Heart right ventricle (tissue), 16 donors: ENCODE measurements at regions of chr21 and their contacts with region 1.

Region 1: DNA sequence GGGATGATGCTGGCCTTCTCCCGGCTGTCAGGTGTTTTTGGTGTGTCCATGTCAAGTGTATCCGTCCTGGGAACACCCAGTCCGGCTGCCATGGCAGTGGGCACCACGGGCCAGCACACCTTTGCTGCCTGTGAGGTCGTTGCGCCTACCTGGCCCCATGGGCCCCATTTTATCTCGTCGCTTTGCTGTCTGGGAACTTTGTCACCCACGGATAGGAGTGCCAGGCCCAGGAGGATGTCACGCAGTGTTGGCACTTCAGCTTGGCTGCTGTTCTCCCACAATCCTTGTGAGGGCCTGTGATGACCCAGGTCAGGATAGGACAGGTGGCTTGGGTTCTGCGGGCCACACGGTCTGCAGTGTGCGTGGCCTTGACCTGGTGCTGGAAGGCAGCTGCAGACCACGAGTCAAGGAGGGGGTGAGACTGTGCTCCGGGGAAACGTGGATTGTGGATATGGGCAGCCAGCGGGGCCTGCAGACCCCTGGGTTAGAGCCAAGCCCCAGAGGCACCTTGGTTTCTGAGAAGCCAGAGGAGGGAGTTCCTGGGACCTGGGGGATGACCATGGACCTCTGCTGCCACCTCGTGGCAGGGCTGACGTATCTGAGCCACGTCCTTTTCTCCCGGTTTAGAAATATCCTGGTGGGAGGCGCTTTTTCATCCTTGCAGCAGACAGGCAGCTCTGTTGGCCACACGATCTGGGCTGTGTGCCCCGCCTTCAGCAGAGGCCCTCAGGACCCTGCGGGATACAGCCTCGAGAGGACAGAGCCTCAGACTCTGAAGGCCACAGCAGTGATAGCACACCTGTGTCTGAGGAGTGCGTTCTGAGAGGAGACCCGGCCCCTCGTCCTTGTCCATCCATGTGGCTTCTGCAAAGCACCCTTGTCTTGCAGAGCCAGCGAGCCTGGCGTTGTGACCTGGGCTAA is 161.1 kb upstream of the COL6A1 start:
- DNase-seq: peak; percentile 64 to 82
- ATAC-seq: peak; percentile 83 to 90 (median 87)
- H3K4me3 ChIP-seq: no peak overlapping the region
- H3K27ac ChIP-seq: no peak overlapping the region
- H3K4me1 ChIP-seq: peaks cover 0 to 19% (median 0%) of the 10 kb centered on the region in 9 donors
- H3K27me3 ChIP-seq: peaks cover 0 to 26% (median 0%) of the 10 kb centered on the region in 7 donors
- CTCF ChIP-seq: peak; percentile 63 to 90 (median 81)

Region 2: DNA sequence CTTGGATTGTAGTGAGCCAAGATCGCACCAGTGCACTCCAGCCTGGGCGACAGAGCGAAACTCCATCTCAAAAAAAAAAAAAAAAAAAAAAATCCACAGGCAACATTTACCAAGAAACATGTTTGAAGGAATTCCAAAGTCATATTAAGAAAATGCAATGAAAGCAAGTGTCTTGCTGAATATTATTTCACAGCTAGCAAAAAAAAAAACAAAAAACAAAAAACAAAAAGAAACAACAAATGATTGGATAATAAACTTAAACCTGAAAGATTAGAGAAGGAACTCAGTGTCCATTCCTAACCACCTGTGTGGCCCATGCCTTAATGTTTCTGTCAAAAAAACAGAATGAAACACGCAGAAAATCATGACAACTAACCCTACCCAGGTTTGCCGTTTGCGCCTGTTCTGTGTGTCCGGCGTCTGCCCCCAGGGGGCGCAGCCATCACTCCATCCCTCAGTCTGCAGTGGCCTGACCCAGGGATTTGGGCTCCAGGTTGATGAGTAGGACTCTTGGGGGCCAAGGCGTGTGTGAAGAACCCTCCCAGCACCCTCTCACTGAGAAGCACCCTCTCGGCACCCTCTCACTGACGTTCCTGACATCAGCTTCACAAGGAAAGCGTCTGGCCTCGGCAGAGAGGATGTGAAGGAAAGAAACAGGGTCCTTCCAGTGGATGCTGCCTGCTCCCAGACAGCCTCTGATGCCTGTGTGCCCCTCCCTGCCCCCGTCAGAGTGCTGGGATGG is 927.7 kb before region 1 on chr21:
- intact Hi-C with region 1: loop called in 1 of 10 experiments (anchors 5 kb)
- DNase-seq: peak; percentile 62 to 74
- ATAC-seq: peak; percentile 39 to 78 (median 68)
- H3K4me3 ChIP-seq: no peak overlapping the region
- H3K27ac ChIP-seq: peak overlapping the region in 1 of 10 donors; percentile 34
- H3K4me1 ChIP-seq: peaks cover 0 to 10% (median 0%) of the 10 kb centered on the region in 9 donors
- H3K27me3 ChIP-seq: peaks cover 0 to 12% (median 3%) of the 10 kb centered on the region in 7 donors
- CTCF ChIP-seq: peak; percentile 66 to 90 (median 84)

Region 3: DNA sequence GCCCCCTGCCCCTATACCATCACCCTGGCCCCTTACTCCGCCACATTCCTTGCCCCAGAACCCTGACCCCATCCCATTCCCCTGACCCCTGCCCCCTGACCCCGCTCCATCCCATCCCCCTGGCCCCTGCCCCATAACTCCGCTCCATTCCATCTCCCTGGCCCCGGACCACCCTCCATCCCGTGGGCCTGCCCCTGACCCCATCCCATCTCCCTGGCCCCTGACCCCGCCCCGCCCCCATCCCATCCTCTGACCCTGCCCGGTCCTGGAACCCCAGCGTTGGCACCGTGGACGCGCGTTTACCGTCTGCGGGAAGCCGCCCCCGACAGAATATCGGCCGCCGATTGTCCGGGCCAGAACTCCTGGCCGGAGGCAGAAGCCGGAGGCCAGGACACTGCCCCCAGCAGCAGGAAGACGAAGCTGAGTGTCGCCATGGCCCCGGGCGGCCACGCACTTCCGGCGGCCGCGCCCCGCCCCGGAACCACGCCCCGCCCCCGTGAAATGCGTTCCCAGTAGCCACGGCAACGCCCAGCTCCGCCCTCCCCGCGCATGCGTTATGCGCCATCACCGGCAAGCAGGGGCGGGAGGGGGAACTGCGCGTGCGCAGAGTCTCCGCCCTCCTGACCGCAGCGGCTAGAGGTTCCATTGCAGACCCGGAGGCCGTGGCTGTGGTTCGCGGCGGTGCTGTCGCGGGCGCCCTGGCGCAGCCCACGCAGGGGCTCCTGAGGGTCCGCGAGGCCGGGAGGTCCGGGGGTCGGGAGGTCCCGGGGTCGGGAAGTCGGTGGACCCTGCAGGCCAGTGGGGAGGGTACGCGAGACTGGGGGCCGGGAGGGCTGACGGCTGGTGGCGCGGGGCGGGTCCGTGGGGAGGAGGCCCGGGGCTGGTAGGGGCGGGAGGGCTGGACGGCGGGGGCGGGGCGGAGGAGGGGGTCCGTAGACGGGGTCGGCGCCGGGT is 532.7 kb before region 1 on chr21 and contains the start of gene POFUT2:
- intact Hi-C with region 1: loop called in 1 of 10 experiments (anchors 5 kb)
- DNase-seq: peak; percentile 97 to 99
- ATAC-seq: peak; percentile 89 to 93 (median 92)
- H3K4me3 ChIP-seq: peak within 1 kb of the TSS; percentile 41 to 77 (median 68)
- H3K27ac ChIP-seq: peak within 1 kb of the TSS in 9 of 10 donors; percentile 35 to 90 (median 81)
- H3K4me1 ChIP-seq: peaks cover 16 to 40% (median 28%) of the 10 kb centered on the region in 9 donors
- H3K27me3 ChIP-seq: no peaks in the 10 kb centered on the region
- CTCF ChIP-seq: peak in 1 of 9 donors; percentile 3
- total RNA-seq, gene POFUT2: 12.7 to 20.4 (median 16.3) TPM

Region 4: DNA sequence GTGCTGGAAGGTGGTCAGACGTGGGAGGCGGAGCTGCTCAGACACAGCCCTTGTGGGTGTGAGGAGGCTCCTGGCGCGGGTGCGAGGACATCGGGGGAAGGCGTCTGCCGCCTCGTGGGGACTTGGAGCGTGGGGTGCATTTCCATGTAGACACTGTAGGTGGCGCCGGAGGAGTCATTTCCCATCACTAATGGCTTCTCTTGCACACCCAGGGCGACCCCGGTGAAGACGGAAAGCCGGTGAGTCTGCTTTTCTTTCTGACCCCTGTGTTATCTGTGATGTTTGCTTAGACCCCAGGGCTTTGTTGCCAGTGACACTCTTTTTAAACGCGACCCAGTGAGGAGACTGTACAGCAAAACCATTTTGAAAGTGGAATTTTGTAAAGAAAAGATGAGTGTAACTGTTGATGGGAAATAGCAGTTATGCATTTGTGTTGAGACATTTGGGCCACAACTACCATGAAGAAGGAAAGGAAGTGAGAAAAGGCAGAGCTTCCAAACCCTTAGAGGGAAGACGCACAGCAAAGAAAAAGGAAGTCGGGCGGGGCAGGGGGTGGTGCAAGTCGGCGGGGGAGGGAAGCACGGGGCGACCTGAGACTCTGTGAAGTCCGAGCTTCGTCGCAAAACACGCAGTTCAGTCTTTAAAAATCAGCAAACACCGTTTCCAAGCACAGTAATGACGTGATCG is 342.2 kb before region 1 on chr21:
- intact Hi-C with region 1: loop called in 1 of 10 experiments (anchors 1 kb)
- DNase-seq: peak; percentile 70 to 73
- ATAC-seq: peak in 7 of 8 donors; percentile 49 to 76 (median 56)
- H3K4me3 ChIP-seq: peak overlapping the region in 5 of 10 donors; percentile 9 to 35 (median 31)
- H3K27ac ChIP-seq: peak overlapping the region in 8 of 10 donors; percentile 6 to 91 (median 44)
- H3K4me1 ChIP-seq: peaks cover 6 to 34% (median 13%) of the 10 kb centered on the region in 9 donors
- H3K27me3 ChIP-seq: no peaks in the 10 kb centered on the region
- CTCF ChIP-seq: peak; percentile 66 to 87 (median 82)

Region 5: DNA sequence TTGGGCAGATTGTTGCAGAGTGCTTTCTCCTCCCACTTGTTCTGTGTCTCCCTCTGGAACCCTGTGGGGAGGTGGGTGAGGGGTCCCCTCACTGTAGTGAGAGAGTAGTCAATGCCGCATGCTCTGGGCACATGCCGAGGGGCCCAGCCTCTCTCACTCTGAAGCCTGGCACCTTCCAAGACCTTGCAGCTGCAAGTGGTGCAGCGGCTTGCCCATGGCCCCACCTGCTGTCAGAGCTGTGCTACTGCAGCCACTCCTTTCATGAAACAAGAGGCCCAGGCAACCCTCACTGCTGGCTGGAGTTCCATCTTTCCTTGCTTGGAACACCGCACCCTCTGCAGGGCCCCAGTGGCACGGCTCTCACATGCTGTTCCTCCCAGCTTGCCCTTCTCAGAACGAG is 102.7 kb after region 1 on chr21:
- intact Hi-C with region 1: loop called in 3 of 10 experiments (anchors 10 kb)
- DNase-seq: peak; percentile 68 to 74
- ATAC-seq: peak; percentile 88 to 93 (median 90)
- H3K4me3 ChIP-seq: no peak overlapping the region
- H3K27ac ChIP-seq: no peak overlapping the region
- H3K4me1 ChIP-seq: peaks cover 0 to 9% (median 0%) of the 10 kb centered on the region in 9 donors
- H3K27me3 ChIP-seq: peaks cover 0 to 8% (median 0%) of the 10 kb centered on the region in 7 donors
- CTCF ChIP-seq: peak; percentile 85 to 93 (median 89)

Region 6: GRCh38 chr21:46334351-46335140 is 514.1 kb after region 1 on chr21:
- intact Hi-C with region 1: no loop called
- DNase-seq: no peak
- ATAC-seq: no peak
- H3K4me3 ChIP-seq: no peak overlapping the region
- H3K27ac ChIP-seq: no peak overlapping the region
- H3K4me1 ChIP-seq: no peaks in the 10 kb centered on the region
- H3K27me3 ChIP-seq: no peaks in the 10 kb centered on the region
- CTCF ChIP-seq: no peak